Aorta (tissue), 5 donors: ENCODE measurements at regions of chr7 and their contacts with region 1.

Region 1: DNA sequence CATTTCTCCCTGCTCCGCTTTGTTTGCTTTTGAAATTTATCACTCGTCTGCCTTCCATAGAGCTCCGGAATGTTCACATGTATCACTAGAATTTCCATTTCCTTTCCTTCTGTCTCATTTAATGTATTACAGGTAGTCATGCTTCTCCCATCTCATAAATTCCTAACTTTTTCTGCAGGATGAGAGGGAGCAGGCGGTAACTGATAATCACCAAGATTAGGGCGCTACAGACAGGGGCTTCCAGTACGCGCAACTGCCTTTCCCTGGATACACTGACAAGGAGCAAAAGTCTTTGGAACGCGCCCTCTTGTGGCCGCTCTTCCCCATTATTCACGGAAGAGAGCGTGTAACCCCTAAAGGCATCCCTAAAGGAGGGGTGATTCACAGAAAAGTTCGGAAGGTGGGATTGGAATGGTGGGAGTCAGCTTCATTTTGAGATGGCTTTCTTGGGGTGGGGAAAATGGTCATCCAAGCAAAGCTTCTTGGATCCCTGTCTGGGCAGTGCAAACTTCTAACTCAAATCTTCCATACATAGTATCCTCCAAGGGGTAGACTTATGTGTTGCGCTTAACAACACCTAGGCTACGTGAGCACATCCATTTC is 6.5 kb downstream of the INHBA start:
- DNase-seq: peak; percentile 84 to 94
- ATAC-seq: peak; percentile 86
- H3K4me3 ChIP-seq: peak overlapping the region; percentile 63 to 91
- H3K27ac ChIP-seq: peak overlapping the region; percentile 89 to 95
- H3K4me1 ChIP-seq: peaks cover 6 to 19% of the 10 kb centered on the region in 2 donors
- H3K27me3 ChIP-seq: no peaks in the 10 kb centered on the region

Region 2: GRCh38 chr7:40763318-40764287 is 932.8 kb before region 1 on chr7:
- intact Hi-C with region 1: loop called in 1 of 2 experiments (anchors 5 kb)
- DNase-seq: no peak
- ATAC-seq: peak; percentile 39
- H3K4me3 ChIP-seq: peak overlapping the region in 1 of 2 donors; percentile 18
- H3K27ac ChIP-seq: peak overlapping the region; percentile 14 to 69
- H3K4me1 ChIP-seq: peaks cover 2 to 7% of the 10 kb centered on the region in 2 donors
- H3K27me3 ChIP-seq: no peaks in the 10 kb centered on the region

Region 3: DNA sequence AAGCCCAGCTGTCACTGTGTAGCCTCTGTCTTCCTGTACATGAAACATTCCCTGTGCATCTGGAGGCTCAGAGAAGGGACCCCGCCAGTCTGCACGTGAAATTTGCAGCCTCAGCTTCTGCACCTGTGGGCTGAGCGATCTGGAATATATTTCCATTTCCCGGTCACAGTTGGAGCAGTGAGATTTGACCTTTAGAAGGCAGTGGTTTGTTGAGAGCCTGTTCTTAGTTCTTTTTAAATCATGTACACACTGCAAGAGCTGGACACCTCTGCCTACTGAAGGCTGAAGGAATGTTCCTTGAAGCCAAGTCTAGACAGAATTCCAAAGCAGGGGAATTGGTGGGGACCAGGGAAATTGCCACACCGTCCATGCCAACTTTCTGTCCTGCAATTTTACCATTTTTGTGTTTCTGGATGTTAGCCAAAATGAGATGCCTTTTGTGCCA is 700.2 kb before region 1 on chr7:
- intact Hi-C with region 1: loop called (anchors 5 to 10 kb)
- DNase-seq: no peak
- ATAC-seq: peak; percentile 45
- H3K4me3 ChIP-seq: no peak overlapping the region
- H3K27ac ChIP-seq: no peak overlapping the region
- H3K4me1 ChIP-seq: peaks cover 6 to 10% of the 10 kb centered on the region in 2 donors
- H3K27me3 ChIP-seq: no peaks in the 10 kb centered on the region

Region 4: DNA sequence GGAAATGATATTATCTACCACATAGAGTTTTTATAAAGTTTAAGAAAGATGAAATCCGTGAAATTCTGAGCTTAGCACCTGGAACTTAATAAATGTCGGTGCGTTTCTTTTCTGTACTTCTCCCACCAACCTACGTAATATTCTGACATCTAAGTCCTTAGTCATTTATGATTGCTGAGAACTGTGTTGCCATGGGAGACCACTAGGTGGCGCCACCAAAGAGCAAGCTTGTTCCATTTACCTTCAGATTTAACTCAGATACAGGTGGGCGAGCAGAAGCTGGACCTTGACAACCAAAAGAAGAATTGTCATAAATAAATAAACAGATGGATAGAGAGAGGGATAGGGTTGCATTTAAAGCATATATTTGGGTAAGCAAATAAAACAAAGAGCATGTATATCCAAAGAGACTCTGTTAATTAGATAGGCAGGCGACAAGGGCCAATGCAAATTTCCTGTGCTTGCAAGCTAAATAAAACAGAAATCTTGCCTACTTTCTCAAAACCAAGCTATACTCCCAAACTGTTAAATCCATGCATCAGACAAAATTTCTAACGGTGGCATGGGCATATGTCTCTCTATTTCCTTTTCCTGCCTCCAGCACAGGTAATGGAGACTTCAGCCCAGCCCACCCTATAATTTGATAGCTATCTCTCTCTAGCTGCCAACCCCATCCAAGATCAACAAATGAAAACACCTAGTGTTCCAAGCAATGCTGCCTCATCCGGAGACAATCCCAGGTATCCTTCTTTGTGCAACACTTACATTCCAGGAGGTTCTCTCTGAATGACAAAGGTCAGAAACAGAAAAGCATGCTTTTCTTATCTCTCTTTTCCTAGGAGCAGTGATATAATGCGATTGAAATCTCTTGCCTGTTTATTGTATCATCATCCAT is 693.1 kb before region 1 on chr7:
- intact Hi-C with region 1: loop called (anchors 5 to 10 kb)
- DNase-seq: no peak
- ATAC-seq: no peak
- H3K4me3 ChIP-seq: no peak overlapping the region
- H3K27ac ChIP-seq: no peak overlapping the region
- H3K4me1 ChIP-seq: no peaks in the 10 kb centered on the region
- H3K27me3 ChIP-seq: no peaks in the 10 kb centered on the region

Region 5: DNA sequence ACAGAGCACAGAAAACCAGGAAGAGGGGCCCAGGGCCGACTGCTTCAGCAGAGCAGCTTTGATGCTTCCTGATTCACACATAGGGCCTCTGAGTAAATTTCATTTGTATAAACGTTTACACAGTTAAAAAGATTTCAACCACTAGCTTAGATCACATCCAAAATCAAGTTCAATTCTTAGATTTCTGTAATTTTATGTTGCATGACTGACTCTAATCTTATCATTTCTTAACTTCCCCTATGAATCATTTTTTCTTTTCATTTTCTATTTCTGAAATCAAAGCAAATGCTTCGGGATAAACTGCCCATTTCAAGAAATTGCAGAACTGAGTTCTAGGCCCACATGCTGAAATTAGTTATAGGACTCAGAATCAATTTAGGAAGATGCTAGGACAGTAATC is 218.2 kb before region 1 on chr7:
- intact Hi-C with region 1: loop called in 1 of 2 experiments (anchors 5 kb)
- DNase-seq: no peak
- ATAC-seq: no peak
- H3K4me3 ChIP-seq: no peak overlapping the region
- H3K27ac ChIP-seq: no peak overlapping the region
- H3K4me1 ChIP-seq: peaks cover 0 to 8% of the 10 kb centered on the region in 2 donors
- H3K27me3 ChIP-seq: no peaks in the 10 kb centered on the region

Region 6: DNA sequence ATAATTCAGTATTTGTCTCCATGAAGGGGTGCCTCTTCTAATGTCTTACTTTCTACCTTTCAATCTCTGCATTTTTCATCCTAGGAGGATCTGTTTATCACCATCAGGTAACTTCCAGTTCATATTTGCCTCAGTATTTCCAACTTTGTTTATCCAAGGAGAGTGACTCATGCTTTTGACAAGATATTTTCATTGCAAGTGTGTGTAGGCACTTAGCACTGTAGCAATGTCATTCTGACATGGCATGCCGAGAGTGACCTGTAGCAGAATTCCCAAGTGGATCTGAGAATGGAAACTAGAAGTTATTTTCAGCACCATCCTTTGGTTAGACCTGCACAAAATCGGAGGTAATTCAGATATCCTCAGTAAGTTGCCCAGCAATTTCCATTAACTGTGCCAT is 123.4 kb before region 1 on chr7:
- intact Hi-C with region 1: loop called in 1 of 2 experiments (anchors 5 kb)
- DNase-seq: no peak
- ATAC-seq: no peak
- H3K4me3 ChIP-seq: no peak overlapping the region
- H3K27ac ChIP-seq: no peak overlapping the region
- H3K4me1 ChIP-seq: peaks cover 0 to 8% of the 10 kb centered on the region in 2 donors
- H3K27me3 ChIP-seq: no peaks in the 10 kb centered on the region